Caco-2 (cell line): ENCODE measurements at regions of chr20 and their contacts with region 1.

Region 1: DNA sequence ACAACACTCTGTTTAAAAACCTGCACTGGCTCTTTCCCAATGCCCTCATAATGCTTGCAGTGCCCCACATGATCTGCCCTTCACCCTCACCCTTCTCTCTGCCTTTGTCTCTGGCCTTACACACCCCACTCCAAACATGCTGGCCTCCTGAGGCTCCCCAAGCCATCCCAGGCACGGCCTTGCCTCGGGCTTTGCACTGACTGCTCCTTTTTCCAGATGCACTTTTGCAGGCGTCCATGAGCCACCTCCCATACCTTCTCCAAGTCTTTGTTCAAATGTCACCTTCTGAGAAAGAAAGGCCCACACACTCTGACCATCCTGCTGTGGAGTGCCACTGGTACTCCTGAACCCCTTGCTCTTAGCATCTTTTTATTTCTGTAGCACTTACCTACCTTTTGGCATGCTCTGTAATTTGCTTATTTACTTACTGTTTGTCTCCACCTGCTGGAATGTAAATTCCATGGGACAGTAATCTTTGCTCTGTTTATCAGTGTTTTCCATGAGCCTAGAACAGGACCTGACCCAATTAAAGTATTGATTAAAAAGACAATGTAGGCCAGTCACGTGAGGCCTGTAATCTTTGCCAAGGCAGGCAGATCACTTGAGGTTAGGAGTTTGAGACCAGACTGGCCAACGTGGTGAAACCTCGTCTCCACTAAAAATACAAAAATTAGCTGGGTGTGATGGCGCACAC is 30.7 kb downstream of the GFRA4 start:
- DNase-seq: no peak
- H3K4me3 ChIP-seq: no peak overlapping the region
- H3K4me3 Mint-ChIP-seq: no peak overlapping the region
- H3K27ac Mint-ChIP-seq: no peak overlapping the region
- H3K4me1 ChIP-seq: no peaks in the 10 kb centered on the region
- H3K4me1 Mint-ChIP-seq: peaks cover 7% of the 10 kb centered on the region
- H3K27me3 ChIP-seq: no peaks in the 10 kb centered on the region
- H3K27me3 Mint-ChIP-seq: no peaks in the 10 kb centered on the region
- CTCF ChIP-seq: peak in 1 of 2 experiments; percentile 20

Region 2: DNA sequence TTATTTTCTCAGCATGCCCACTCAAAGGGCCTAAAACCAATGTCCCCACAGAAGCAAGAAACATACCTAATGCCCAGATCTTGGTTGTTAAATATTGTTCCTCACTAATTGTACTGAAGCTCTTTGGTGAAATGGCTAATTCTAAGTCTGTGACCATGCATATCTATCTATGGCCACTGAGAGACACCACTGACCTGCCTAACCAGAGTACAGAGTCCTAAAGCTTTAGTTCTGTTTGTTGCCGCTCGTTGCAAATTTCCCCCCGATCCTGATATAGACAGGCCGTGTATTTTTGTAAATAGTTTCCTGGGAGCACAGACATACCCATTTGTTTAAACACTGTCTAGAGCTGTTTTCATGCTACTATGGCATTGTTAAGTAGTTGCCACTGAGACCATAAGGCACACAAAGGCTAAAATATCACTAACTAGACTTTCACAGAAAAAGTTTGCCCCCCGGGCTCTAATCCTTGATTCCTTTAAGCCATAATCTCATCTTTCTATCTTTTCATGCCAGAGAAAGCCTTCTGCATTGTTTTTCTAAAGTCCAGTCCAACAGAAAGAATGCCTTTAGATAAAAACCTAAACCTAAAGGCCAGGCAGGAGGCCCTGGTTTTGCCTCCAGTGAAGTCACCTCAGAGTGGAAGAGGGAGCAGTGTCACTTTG is 273.6 kb before region 1 on chr20:
- CTCF ChIA-PET with region 1: no interaction called
- POLR2A ChIA-PET with region 1: no interaction called
- intact Hi-C with region 1: loop called (anchors 1 kb)
- DNase-seq: peak in 1 of 2 experiments; percentile 47
- H3K4me3 ChIP-seq: no peak overlapping the region
- H3K4me3 Mint-ChIP-seq: peak overlapping the region; percentile 8
- H3K27ac Mint-ChIP-seq: peak overlapping the region; percentile 27
- H3K4me1 ChIP-seq: no peaks in the 10 kb centered on the region
- H3K4me1 Mint-ChIP-seq: peaks cover 9% of the 10 kb centered on the region
- H3K27me3 ChIP-seq: no peaks in the 10 kb centered on the region
- H3K27me3 Mint-ChIP-seq: peaks cover 2% of the 10 kb centered on the region
- CTCF ChIP-seq: peak; percentile 32 to 63

Region 3: GRCh38 chr20:4244700-4245485 is 612.4 kb after region 1 on chr20:
- CTCF ChIA-PET with region 1: no interaction called
- POLR2A ChIA-PET with region 1: no interaction called
- intact Hi-C with region 1: no loop called
- DNase-seq: peak; percentile 44 to 70
- H3K4me3 ChIP-seq: no peak overlapping the region
- H3K4me3 Mint-ChIP-seq: no peak overlapping the region
- H3K27ac Mint-ChIP-seq: peak overlapping the region; percentile 68
- H3K4me1 ChIP-seq: peaks cover 14% of the 10 kb centered on the region
- H3K4me1 Mint-ChIP-seq: peaks cover 9% of the 10 kb centered on the region
- H3K27me3 ChIP-seq: no peaks in the 10 kb centered on the region
- H3K27me3 Mint-ChIP-seq: peaks cover 4% of the 10 kb centered on the region
- CTCF ChIP-seq: no peak